Activated B cell treated with CpG ODN at 0.5 μM for 24 hours (primary cell): ENCODE measurements at regions of chr22 and their contacts with region 1.

Region 1: DNA sequence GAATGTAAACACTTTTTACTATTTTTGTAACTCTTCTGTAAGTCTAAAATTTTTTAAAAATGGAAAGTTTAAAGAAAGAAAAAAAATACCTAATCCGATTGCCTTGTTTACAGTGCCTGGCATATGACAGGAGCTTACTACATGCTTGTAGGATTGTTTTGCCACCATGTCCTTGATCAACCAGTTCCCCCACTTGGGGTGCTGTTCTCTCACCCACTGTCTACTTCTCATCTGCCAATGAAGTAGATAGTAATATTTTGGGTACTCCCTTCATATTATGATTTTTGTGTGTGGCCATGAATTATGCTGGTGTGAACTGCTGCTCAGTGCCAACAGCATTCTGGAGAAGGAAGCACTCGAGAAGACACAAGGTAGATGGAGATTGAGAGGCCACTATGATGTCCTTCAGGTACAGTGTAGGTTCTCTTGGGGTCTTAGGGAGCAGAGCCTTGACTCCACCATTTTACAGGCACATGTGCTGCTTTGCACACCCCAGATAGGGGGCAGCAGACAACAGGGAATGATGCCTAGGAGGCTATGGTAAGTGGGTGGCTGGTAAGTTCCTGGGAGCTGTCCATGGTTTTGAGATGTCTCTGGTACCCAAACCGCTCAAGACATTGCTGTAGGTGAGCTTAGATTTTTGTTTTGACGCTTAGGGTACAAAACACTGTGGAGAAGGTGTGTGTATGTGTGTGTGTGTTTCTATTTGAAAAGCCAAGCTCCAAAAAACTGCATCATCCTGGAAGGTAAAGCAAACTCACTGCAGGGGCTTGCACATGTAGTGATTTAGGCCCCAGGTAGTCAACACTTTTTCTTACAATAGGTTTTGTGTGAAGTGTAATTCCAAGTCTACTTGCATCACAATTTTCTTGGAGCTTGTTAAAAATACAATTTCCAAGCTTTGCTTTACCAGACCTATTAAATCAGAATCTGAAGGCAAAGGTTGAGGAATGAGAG is 494.5 kb upstream of the LARGE1 start:
- DNase-seq: no peak
- ATAC-seq: no peak
- H3K4me3 Mint-ChIP-seq: no peak overlapping the region
- H3K27ac Mint-ChIP-seq: no peak overlapping the region
- H3K4me1 Mint-ChIP-seq: no peaks in the 10 kb centered on the region
- H3K27me3 Mint-ChIP-seq: no peaks in the 10 kb centered on the region
- CTCF ChIP-seq: no peak

Region 2: GRCh38 chr22:35150183-35151107 is 735.7 kb after region 1 on chr22:
- CTCF ChIA-PET with region 1: no interaction called
- POLR2A ChIA-PET with region 1: no interaction called
- intact Hi-C with region 1: loop called (anchors 10 kb)
- DNase-seq: peak; percentile 44
- ATAC-seq: peak; percentile 61
- H3K4me3 Mint-ChIP-seq: no peak overlapping the region
- H3K27ac Mint-ChIP-seq: no peak overlapping the region
- H3K4me1 Mint-ChIP-seq: peaks cover 3% of the 10 kb centered on the region
- H3K27me3 Mint-ChIP-seq: peaks cover 29% of the 10 kb centered on the region
- CTCF ChIP-seq: no peak